OCI-LY7 (cell line): ENCODE measurements at regions of chr6 and their contacts with region 1.

Region 1: GRCh38 chr6:104227508-104227907 is 632.2 kb downstream of the HACE1 start:
- DNase-seq: no peak
- H3K4me3 ChIP-seq: no peak overlapping the region
- H3K27ac ChIP-seq: no peak overlapping the region
- H3K4me1 ChIP-seq: no peaks in the 10 kb centered on the region
- CTCF ChIP-seq: no peak

Region 2: GRCh38 chr6:103167345-103168071 is 1060.0 kb before region 1 on chr6:
- CTCF ChIA-PET with region 1: no interaction called
- POLR2A ChIA-PET with region 1: interaction called, 10 read pairs
- intact Hi-C with region 1: no loop called
- DNase-seq: no peak
- H3K4me3 ChIP-seq: no peak overlapping the region
- H3K27ac ChIP-seq: no peak overlapping the region
- H3K4me1 ChIP-seq: no peaks in the 10 kb centered on the region
- CTCF ChIP-seq: no peak

Region 3: DNA sequence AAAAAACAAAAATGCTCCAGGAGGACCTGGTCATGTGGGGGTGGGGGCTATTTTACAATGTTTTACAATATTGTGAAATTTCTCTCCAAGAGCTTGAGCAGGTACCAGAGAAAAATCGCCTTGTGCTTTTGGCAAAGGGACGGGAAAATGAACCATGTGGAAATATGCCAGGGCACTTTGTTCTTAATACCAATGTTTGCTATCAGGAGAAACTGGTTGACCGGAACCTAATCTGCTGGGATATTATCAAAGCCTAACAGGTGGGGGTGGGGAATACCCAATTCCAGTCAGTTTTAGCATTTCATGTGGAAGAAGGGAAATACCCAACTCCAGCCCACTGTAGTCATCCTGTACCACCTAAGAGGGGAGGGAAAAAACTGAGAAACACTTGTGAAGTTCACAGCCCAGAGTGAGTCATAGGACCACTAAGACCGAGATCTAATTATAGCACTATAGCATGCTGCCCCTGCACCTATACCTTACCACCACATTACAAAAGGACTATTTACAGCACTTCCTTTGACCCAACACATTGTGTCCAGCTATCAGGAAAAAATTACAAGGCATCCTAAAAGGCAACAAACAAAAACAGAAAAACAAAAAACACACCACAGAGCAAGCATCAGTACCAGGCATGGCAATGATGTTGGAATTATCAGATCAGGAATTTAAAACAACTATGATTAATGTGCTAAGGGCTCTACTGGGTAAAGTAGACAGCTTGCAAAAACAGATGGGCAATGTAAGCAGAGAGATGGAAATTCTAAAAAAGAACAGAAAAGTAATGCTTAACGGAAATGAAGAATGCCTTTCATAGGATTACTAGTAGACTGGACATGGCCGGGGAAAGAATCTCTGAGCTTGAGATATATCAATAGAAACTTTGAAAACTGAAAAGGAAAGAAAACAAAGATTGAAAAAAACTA is 1036.4 kb after region 1 on chr6:
- CTCF ChIA-PET with region 1: no interaction called
- POLR2A ChIA-PET with region 1: no interaction called
- intact Hi-C with region 1: no loop called
- DNase-seq: no peak
- H3K4me3 ChIP-seq: no peak overlapping the region
- H3K27ac ChIP-seq: no peak overlapping the region
- H3K4me1 ChIP-seq: no peaks in the 10 kb centered on the region
- CTCF ChIP-seq: no peak